PC-9 (cell line): ENCODE measurements at regions of chr1 and their contacts with region 1.

Region 1: DNA sequence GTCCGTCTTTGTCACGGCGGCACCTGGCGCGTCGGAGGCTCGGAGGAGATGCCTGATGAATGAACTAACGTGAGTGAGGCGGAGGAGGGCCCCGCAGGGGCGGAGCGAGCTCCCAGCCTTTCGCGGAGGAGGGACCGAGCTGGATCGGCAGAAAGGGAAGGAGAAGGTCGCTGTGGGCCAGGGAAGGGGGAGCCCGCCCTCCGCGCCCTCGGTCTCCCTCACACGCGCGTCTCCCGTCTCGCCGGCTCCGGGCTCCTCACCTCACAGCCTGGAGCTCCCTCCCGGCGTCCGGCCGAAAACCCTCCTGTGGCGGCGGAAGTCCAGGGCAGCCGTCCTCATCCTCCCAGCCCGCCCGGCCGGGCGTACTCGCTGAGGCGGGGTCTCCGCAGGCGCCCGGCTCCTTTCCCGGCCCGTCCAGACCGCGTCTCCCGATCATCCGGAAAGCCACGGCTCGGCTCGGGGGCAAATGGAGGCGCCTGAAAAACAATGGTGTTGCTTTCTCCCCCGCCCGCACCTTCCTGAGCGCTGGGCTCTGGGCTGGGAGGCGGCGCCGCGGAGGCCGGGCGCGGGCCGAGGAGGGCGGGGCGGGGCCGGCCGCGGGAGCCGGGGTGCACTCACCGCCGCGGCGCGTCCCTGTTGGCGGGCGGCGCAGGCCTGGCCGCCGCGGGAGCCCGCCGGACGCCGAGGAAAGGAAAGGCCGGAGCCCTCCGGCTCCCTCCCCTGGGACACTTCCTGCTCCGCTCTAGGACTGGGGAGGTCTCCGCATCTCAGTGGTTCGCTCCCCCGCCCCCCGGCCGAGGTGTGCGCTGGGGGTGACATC is at the start of gene ZNF496:
- DNase-seq: peak; percentile 63 to 93
- H3K4me3 ChIP-seq: peak within 1 kb of the TSS; percentile 75
- H3K27ac ChIP-seq: peak within 1 kb of the TSS; percentile 44
- H3K4me1 ChIP-seq: 0 out of 2 replicates have a peak, but pooled peaks cover 4% of the 10 kb centered on the region
- H3K27me3 ChIP-seq: no peaks in the 10 kb centered on the region
- CTCF ChIP-seq: no peak
- total RNA-seq, gene ZNF496: 37.6 and 56.8 TPM in 2 replicates

Region 2: DNA sequence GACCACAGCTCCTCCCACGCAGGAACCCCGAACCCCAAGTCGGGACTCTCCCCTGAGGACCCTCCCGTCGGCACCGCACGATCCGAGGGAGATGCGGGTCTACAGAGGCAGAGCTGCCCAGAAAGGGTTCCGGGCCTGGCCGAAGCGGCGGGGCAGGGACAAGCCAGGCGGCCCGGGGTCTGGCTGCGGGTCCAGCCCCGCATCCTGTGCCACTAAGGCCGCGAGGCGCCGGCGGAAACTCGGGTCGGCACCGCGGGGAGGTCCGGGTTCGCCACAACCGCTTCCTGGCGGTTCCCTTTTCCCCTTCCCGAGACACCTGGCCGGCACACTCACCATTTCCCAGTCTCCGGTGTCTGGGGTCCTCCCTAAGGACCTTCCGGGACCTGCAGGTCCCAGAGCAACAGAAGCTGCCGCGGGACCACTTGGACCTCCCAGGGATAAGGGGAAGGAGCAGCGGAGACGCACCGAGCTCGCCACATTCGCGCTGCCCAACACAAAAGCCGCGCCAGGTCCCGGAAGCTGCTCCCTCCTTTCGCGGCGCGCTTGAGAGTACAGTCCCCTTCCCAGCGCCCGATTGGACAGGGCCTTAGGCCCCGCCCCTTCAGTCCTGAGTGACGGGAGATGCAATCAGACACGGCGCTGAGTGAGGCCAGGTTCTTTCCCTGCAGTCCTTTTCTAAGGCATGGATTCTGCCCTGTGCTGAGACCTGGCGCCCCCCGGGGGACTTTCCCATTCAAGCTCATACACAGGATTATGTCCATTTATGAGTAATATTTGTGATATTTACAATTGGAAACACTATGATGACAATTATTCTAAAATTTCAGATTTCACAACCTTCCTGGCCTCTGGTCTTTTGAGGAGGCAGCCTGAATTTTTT is 252.9 kb before region 1 on chr1 and contains the start of gene ZNF670:
- CTCF ChIA-PET with region 1: no interaction called
- POLR2A ChIA-PET with region 1: no interaction called
- intact Hi-C with region 1: loop called (anchors 2 kb)
- DNase-seq: peak; percentile 84 to 92
- H3K4me3 ChIP-seq: peak within 1 kb of the TSS; percentile 95
- H3K27ac ChIP-seq: peak within 1 kb of the TSS; percentile 45
- H3K4me1 ChIP-seq: no peaks in the 10 kb centered on the region; the same call in 1 of the 2 replicates
- H3K27me3 ChIP-seq: no peaks in the 10 kb centered on the region
- CTCF ChIP-seq: no peak; the same call in 1 of the 2 replicates
- total RNA-seq, gene ZNF670: 2.4 and 2.5 TPM in 2 replicates

Region 3: GRCh38 chr1:247103859-247104591 is 227.4 kb before region 1 on chr1 and contains the start of gene ZNF669:
- CTCF ChIA-PET with region 1: no interaction called
- POLR2A ChIA-PET with region 1: no interaction called
- intact Hi-C with region 1: loop called (anchors 5 kb)
- DNase-seq: peak; percentile 80 to 95
- H3K4me3 ChIP-seq: peak within 1 kb of the TSS; percentile 76
- H3K27ac ChIP-seq: peak within 1 kb of the TSS; percentile 53
- H3K4me1 ChIP-seq: 0 out of 2 replicates have a peak, but pooled peaks cover 4% of the 10 kb centered on the region
- H3K27me3 ChIP-seq: peaks cover 8% of the 10 kb centered on the region; the same call in 1 of the 2 replicates
- CTCF ChIP-seq: no peak
- total RNA-seq, gene ZNF669: 5.3 and 7.0 TPM in 2 replicates

Region 4: DNA sequence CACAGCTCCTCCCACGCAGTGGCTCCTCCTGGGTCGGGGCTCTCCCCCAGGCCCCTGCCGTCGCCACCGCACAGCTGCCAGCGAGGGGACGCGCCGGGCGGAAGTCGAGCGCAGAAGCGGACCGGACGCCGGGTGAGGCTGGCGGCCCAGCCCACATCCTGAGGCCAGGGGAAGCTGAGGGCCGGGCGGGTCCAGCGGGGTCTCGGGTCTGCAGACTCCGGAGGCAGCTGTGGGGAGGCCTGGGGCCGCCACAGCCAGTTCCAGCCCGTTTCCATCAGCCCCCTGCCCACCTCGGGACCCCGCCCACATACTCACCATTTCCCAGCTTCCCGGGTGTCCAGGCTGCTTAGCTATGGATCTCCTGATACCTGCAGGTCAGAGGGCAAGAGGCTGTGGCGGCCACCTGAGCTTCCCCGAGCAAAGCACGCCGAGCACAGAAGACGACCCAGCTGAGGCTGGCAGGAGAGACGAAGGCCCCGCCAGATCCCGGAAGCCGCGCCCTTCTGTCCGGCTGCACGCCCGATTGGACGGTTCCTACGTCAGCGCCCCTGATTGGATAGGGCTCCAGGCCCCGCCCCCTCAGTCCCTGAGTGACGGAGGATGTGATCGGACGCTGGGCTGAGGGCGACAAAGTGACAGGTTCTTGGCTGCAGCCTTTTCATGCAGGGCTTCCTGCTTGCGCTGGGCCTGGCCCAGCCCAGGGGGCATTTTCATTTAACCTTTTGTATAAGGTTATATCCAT is 120.8 kb before region 1 on chr1:
- CTCF ChIA-PET with region 1: no interaction called
- POLR2A ChIA-PET with region 1: no interaction called
- intact Hi-C with region 1: loop called (anchors 2 kb)
- DNase-seq: peak; percentile 84 to 96
- H3K4me3 ChIP-seq: peak overlapping the region; percentile 90
- H3K27ac ChIP-seq: 0 out of 2 replicates have a peak overlapping the region, but pooled peaks have one; percentile 34
- H3K4me1 ChIP-seq: peaks cover 9% of the 10 kb centered on the region; the same call in 1 of the 2 replicates
- H3K27me3 ChIP-seq: no peaks in the 10 kb centered on the region
- CTCF ChIP-seq: no peak

Region 5: DNA sequence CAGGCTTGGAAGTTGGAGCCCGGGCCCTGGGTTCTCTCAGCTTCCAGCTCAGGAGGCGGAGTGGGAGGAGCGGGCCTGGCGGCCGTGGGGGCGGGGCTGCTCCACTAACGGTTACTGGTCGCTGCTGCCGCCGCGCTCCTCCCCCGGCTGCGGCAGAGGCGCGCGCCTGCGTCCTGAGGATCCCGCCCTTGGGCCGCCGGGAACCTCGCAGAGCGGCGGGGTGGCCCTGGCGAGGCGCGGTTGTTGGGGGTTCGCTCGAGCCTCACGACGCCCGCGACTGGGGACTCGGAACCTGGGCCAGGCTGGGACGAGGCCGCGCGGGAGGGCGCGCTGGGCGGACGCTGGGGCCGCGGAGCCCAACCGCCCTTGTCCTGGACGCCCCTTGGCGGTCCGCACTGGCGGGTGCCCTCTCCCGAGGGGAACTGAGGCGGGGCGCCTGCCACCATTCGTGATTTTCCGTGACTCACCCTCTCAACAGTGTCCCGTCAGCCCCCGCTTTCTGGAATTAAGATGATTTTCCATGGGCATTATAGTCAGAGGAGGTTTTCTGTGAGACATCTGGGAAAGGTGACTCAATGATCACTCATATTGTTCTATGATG is 308.1 kb after region 1 on chr1:
- CTCF ChIA-PET with region 1: no interaction called
- POLR2A ChIA-PET with region 1: no interaction called
- intact Hi-C with region 1: no loop called
- DNase-seq: no peak
- H3K4me3 ChIP-seq: no peak overlapping the region
- H3K27ac ChIP-seq: no peak overlapping the region
- H3K4me1 ChIP-seq: no peaks in the 10 kb centered on the region
- H3K27me3 ChIP-seq: no peaks in the 10 kb centered on the region
- CTCF ChIP-seq: no peak